Activated naive CD8-positive, alpha-beta T cell treated with anti-CD3 and anti-CD28 coated beads, Interleukin-2, amount 10 ng/mL, durations not matched to agents 7 days and 5 days (primary cell): ENCODE measurements at regions of chr7 and their contacts with region 1.

Region 1: GRCh38 chr7:100563809-100564400 is 9.8 kb downstream of the SAP25 start:
- DNase-seq: peak; percentile 88
- ATAC-seq: peak; percentile 70
- H3K4me3 Mint-ChIP-seq: no peak overlapping the region
- H3K27ac Mint-ChIP-seq: peak overlapping the region; percentile 3
- H3K4me1 Mint-ChIP-seq: peaks cover 20% of the 10 kb centered on the region
- H3K27me3 Mint-ChIP-seq: no peaks in the 10 kb centered on the region

Region 2: DNA sequence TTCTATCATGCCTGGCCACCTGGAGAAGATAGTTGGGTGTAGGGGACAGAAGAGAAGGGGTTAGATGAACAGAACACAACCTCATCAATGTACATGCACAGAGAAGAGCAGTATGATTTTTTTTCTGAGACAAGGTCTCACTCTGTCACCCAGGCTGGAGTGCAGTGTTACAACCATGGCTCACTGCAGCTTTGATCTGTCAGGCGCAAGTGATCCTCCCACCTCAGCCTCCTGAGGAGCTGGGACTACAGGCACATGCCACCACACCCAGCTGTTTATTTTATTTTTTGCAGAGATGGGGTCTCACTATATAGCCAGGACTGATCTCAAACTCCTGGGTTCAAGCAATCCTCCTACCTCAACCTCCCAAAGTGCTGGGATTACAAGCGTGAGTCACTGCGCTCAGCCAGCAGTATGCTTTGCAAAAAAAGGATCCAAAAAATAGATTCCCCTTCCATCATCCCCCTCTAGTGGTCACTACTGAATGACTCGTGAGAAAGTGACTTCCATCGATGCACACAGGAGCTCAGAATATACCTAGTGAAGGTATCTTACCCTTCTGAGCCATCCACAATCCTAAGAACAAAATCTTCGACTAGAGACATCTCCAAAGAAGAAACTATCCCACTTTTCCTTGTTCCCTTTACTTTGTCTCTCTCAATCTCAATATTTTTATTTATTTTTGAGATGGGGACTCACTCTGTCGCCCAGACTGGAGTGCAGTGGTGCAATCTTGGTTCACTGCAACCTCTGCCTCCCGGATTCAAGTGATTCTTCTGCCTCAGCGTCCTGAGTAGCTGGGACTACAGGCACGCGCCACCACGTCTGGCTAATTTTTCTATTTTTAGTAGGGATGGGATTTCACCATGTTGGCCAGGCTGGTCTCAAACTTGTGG is 156.4 kb before region 1 on chr7:
- POLR2A ChIA-PET with region 1: no interaction called
- DNase-seq: no peak
- ATAC-seq: peak; percentile 80
- H3K4me3 Mint-ChIP-seq: no peak overlapping the region
- H3K27ac Mint-ChIP-seq: no peak overlapping the region
- H3K4me1 Mint-ChIP-seq: peaks cover 4% of the 10 kb centered on the region
- H3K27me3 Mint-ChIP-seq: peaks cover 5% of the 10 kb centered on the region

Region 3: DNA sequence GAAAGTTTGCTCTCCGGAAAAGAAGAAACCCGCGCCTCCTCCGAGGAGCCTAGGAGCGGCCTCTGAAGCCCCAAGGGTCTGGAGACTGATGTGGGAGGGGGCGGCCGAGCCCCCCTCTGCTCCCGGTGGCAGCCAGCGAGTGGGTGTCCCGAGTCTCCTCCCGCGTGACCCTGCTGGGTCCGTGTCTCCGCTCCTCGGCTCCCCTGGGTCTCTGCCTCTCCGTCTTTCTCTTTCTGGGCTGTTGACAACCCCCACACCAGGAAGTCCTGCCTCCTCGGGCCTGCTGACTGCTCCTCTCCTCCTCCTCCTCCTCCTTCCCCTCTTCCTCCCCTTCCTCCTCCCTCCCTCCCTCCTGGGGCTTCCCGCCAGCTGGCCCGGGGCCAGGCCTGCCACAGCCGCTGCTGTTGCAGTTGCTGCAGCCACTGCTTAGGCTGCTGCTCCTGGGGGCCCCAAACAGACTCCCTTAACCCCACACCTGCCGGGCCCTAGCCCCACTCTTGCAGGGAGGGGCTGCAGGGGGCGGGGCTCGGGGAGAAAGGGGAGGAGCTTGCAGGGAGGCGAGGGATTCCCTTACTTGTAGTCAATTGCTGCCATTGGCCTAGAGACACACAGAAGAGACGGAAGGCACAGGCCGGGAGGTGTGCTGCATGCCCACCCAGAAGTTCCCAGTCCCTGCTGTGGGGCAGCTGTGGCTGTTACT is 84.8 kb before region 1 on chr7 and contains the start of gene TSC22D4:
- POLR2A ChIA-PET with region 1: interaction called, 13 read pairs
- DNase-seq: peak; percentile 93
- ATAC-seq: peak; percentile 78
- H3K4me3 Mint-ChIP-seq: peak within 1 kb of the TSS; percentile 100
- H3K27ac Mint-ChIP-seq: peak within 1 kb of the TSS; percentile 99
- H3K4me1 Mint-ChIP-seq: peaks cover 28% of the 10 kb centered on the region
- H3K27me3 Mint-ChIP-seq: peaks cover 3% of the 10 kb centered on the region
- total RNA-seq, gene TSC22D4: 157 to 159 TPM

Region 4: DNA sequence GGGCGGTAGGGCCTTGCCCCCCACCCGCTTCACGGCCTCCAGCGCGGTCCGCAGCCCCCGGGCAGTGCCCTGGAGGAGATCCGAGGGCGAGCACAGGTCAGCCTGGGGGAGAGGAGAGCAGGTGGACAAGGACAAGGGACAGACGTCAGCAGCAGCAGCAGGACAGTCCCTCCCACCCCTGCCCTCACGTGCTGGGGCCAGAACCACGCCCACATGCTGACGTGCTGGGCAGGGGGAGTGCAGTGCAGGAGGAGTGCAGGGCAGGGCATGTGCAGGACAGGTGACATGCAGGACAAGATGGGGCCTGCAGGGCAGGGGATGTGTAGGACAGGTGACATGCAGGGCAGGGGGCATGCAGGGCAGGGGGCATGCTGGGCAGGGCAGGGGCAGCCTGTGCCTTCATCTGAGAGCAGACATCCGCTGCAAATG is 11.3 kb after region 1 on chr7:
- POLR2A ChIA-PET with region 1: no interaction called
- DNase-seq: no peak
- ATAC-seq: no peak
- H3K4me3 Mint-ChIP-seq: no peak overlapping the region
- H3K27ac Mint-ChIP-seq: no peak overlapping the region
- H3K4me1 Mint-ChIP-seq: peaks cover 7% of the 10 kb centered on the region
- H3K27me3 Mint-ChIP-seq: no peaks in the 10 kb centered on the region

Region 5: DNA sequence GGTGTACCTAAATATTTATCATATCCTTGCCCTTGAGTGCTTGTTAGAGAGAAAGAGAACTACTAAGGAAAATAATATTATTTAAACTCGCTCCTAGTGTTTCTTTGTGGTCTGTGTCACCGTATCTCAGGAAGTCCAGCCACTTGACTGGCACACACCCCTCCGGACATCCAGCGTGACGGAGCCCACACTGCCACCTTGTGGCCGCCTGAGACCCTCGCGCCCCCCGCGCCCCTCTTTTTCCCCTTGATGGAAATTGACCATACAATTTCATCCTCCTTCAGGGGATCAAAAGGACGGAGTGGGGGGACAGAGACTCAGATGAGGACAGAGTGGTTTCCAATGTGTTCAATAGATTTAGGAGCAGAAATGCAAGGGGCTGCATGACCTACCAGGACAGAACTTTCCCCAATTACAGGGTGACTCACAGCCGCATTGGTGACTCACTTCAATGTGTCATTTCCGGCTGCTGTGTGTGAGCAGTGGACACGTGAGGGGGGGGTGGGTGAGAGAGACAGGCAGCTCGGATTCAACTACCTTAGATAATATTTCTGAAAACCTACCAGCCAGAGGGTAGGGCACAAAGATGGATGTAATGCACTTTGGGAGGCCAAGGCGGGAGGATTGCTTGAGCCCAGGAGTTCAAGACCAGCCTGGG is 574.4 kb after region 1 on chr7:
- POLR2A ChIA-PET with region 1: no interaction called
- DNase-seq: peak; percentile 55
- ATAC-seq: peak; percentile 90
- H3K4me3 Mint-ChIP-seq: peak overlapping the region; percentile 63
- H3K27ac Mint-ChIP-seq: peak overlapping the region; percentile 72
- H3K4me1 Mint-ChIP-seq: peaks cover 35% of the 10 kb centered on the region
- H3K27me3 Mint-ChIP-seq: peaks cover 40% of the 10 kb centered on the region